ENCODE measurements at regions of chr5 and their contacts with region 1.

Region 1: DNA sequence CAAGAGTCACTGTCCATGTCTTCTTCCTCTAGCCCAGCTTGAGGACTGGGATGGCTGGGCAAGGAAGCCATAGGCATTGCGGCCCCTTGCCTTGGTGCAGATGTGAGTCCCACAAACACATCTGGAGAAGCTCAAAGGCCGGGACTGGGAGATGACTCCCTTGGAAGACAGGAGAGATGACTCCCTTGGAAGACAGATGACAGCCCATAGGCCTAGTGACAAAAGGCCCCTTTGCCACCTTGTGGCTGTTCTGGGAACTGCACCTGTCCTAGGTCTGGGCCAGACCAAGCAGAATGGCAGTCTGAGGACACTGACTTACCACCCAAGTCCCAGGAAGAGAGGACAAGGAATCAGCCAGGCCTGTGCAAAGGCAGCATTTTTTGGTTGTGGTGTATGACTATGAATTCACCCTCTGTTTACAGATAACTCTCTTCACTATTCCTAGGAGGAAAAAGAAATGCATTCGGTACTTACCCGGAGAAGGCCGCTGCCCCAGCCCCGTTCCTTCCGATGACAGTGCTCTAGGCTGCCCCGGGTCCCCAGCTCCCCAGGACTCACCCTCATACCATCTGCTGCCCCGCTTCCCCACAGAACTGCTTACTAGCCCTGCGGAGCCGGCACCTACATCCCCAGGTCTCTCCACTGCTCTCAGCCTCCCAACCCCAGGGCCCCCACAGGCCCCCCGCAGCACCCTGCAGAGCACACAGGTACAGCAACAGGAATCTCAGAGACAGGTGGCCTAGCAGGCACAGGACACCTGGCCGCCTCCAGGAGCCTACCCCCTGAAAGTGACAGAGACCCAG is 30.8 kb downstream of the SKP1 start:
- DNase-seq: peak in 1 of 2 donors; percentile 75
- ATAC-seq: peak; percentile 85 to 91
- H3K4me3 ChIP-seq: no peak overlapping the region
- H3K27ac ChIP-seq: peak overlapping the region in 1 of 4 donors; percentile 52
- H3K4me1 ChIP-seq: peaks cover 24 to 26% of the 10 kb centered on the region in 2 donors
- H3K27me3 ChIP-seq: no peaks in the 10 kb centered on the region
- CTCF ChIP-seq: peak; percentile 83 to 95 (median 93)
- POLR2A ChIP-seq: no peak

Region 2: GRCh38 chr5:134026521-134027268 is 119.3 kb before region 1 on chr5:
- in situ Hi-C with region 1: loop called in 1 of 4 experiments (anchors 25 kb)
- intact Hi-C with region 1: no loop called
- DNase-seq: peak in 1 of 2 donors; percentile 46
- ATAC-seq: peak; percentile 52 to 82
- H3K4me3 ChIP-seq: no peak overlapping the region
- H3K27ac ChIP-seq: no peak overlapping the region
- H3K4me1 ChIP-seq: peaks cover 0 to 3% of the 10 kb centered on the region in 2 donors
- H3K27me3 ChIP-seq: no peaks in the 10 kb centered on the region
- CTCF ChIP-seq: peak in 2 of 5 experiments; percentile 17 to 18
- POLR2A ChIP-seq: no peak

Region 3: DNA sequence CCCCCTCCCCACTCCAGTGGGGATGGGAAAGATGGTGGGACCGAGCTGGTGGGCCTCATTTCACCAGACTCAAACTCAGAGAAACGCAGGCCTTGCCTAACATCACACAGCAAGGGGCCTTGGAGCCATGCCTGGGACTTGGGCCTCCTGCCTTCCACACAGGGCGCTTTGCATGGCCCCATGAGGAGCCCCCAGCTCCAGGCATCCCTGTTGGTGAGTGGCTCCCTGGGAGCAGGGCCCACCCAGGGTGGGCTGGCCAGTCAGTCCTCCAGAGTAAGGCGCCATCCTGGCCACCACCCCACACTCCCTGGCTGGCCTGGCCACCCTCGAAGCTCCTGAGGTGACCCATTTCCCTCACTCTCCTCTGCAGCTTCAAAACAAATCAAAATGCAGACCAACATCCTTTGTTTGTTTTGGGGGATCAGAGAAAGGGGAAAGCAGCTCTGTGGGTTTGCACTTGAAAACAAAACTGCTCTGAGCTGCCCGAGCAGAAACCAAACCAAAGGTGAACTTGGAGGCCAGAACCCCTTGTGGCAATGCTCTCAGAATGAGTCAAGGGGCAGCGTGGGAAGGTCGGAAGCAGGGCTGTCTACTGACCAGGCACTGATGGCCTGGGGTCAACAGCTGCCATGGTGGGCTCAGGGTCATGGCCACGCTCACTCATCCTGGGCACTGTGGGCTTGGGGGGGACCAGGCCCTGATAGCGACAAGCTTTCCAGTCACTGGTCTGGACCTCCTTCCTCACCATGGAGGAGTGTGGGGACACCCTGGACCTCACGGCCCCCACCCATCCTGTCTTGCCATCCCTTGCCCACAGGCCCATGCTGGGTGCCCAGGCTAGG is 104.2 kb before region 1 on chr5:
- in situ Hi-C with region 1: loop called (anchors 5 to 25 kb)
- intact Hi-C with region 1: loop called (anchors 1 kb)
- DNase-seq: no peak
- ATAC-seq: no peak
- H3K4me3 ChIP-seq: no peak overlapping the region
- H3K27ac ChIP-seq: no peak overlapping the region
- H3K4me1 ChIP-seq: no peaks in the 10 kb centered on the region
- H3K27me3 ChIP-seq: no peaks in the 10 kb centered on the region
- CTCF ChIP-seq: no peak
- POLR2A ChIP-seq: no peak

Region 4: DNA sequence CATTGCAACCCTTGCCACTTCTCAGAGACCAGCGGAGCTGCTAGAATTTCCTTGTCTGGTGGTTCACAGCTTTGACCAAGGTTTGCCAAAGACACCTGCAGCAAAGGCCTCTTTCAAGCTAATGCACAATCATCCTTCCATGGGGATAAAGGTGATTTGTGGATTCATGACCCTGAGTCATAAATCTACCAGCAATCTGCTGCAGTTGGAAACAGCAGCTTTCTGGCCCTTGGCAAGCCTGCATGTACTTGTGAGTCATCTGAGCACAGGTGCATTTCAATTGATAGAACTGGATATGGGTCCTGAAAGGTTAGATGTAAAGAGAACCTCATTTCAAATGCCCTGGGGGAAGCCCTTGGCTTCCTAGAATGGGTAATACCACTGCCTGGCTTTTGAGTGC is 53.1 kb before region 1 on chr5:
- in situ Hi-C with region 1: loop called in 1 of 4 experiments (anchors 10 kb)
- intact Hi-C with region 1: no loop called
- DNase-seq: peak in 1 of 2 donors; percentile 27
- ATAC-seq: peak; percentile 84 to 86
- H3K4me3 ChIP-seq: no peak overlapping the region
- H3K27ac ChIP-seq: no peak overlapping the region
- H3K4me1 ChIP-seq: no peaks in the 10 kb centered on the region
- H3K27me3 ChIP-seq: no peaks in the 10 kb centered on the region
- CTCF ChIP-seq: no peak
- POLR2A ChIP-seq: no peak

Region 5: GRCh38 chr5:134101686-134102439 is 44.1 kb before region 1 on chr5:
- in situ Hi-C with region 1: loop called in 1 of 4 experiments (anchors 10 kb)
- intact Hi-C with region 1: loop called (anchors 1 kb)
- DNase-seq: peak in 1 of 2 donors; percentile 40
- ATAC-seq: peak; percentile 78 to 79
- H3K4me3 ChIP-seq: no peak overlapping the region
- H3K27ac ChIP-seq: no peak overlapping the region
- H3K4me1 ChIP-seq: no peaks in the 10 kb centered on the region
- H3K27me3 ChIP-seq: no peaks in the 10 kb centered on the region
- CTCF ChIP-seq: peak; percentile 66 to 95 (median 85)
- POLR2A ChIP-seq: no peak